Activated CD4-positive, alpha-beta T cell treated with anti-CD3 and anti-CD28 coated beads, Interleukin-2, amount 10 ng/mL, durations not matched to agents 24 days and 14 days (primary cell): ENCODE measurements at regions of chr17 and their contacts with region 1.

Region 1: DNA sequence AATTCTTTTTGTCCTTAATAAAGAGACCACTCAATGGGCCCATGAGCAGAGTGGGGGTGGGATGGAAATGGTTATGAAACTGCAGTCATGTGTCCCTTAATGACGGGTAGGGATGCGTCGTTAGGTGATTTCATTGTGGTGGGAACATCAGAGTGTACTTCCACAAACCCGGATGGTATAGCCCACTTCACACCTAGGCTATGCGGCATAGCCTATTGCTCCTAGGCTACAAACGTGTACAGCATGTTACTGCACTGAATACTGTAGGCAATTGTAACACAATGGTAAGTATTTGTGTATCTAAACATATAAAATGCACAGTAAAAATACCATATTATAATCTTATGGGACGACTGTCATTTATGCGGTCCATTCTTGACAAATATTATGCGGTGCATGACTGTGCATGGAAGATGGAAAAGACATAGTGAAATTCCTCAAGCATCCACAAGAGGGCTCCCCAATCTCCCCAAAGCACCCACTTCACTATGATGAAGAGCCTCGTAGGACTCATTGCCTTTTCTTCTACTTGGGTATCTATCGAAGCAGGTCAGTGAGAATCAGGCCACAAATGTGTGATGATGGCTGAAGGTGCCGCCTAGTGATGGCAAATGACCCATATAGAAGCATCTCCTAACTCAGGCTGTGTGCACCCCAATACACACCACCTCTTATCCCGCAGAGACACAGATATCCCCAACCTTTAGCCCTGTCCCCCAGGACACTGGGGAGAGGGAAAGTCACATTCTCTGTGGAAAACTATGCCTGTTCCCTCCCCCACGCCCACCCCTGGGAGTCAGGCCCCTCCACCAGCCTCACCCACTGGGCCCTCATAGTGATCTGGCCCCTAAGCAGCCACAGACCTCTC is 43.5 kb downstream of the TBX21 start:
- DNase-seq: peak; percentile 81
- H3K4me3 Mint-ChIP-seq: no peak overlapping the region
- H3K27ac Mint-ChIP-seq: no peak overlapping the region
- H3K4me1 Mint-ChIP-seq: peaks cover 2% of the 10 kb centered on the region
- H3K27me3 Mint-ChIP-seq: peaks cover 52% of the 10 kb centered on the region

Region 2: DNA sequence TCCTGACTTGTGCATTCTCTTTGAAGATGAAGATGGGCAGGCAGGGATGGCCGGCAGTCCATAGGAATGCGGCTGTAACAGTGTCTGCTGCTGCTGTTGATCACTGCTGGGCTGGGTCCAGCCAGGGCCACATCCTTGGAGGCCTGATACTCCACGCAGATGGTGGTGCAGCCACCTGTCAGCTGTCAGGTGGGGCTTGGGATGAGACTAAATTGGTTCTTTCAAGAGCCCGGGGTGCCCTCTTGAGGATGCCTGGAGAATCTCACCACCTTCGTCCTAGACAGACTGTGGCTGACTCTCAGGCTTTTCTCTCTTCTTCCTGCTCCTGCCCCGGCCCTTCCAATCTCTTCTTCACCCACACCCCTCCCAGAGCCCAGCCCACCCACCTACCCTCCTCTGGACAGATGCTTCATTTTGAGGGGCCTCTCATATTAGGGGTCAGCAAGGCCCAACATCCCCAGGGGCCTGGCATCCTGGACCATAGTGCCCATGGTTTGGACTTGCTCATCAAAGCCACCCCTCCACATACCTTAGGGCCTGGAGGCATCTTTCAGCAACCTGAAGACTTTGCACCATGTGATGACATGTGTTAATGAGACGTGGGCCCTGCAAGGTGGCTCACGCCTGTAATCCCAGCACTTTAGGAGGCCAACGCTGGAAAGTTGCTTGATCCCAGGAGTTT is 25.9 kb after region 1 on chr17:
- intact Hi-C with region 1: loop called (anchors 2 kb)
- DNase-seq: peak; percentile 87
- H3K4me3 Mint-ChIP-seq: no peak overlapping the region
- H3K27ac Mint-ChIP-seq: no peak overlapping the region
- H3K4me1 Mint-ChIP-seq: peaks cover 3% of the 10 kb centered on the region
- H3K27me3 Mint-ChIP-seq: peaks cover 5% of the 10 kb centered on the region

Region 3: GRCh38 chr17:47889734-47890529 is 113.4 kb after region 1 on chr17:
- intact Hi-C with region 1: loop called (anchors 1 kb)
- DNase-seq: peak; percentile 96
- H3K4me3 Mint-ChIP-seq: no peak overlapping the region
- H3K27ac Mint-ChIP-seq: no peak overlapping the region
- H3K4me1 Mint-ChIP-seq: peaks cover 18% of the 10 kb centered on the region
- H3K27me3 Mint-ChIP-seq: no peaks in the 10 kb centered on the region

Region 4: DNA sequence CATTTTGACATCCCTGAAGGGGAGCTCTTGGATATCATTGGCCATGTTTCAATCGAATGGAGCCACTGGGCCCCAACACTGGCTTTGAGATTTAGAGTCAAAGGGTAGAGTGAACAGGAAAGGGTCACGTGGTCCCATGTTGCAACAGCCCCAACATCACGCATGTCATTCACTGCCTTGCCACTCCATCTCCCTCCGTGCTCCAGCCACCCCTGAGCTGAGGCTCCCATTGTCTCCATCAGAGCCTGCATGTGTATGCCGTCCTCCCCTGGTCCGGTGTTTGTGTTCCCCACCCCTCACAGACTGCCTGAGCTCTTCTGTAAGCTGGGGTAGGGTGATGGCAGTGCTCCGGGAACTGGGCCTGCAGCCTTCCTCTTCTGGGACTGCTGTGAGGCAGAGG is 283.7 kb after region 1 on chr17:
- intact Hi-C with region 1: no loop called
- DNase-seq: no peak
- H3K4me3 Mint-ChIP-seq: no peak overlapping the region
- H3K27ac Mint-ChIP-seq: no peak overlapping the region
- H3K4me1 Mint-ChIP-seq: peaks cover 24% of the 10 kb centered on the region
- H3K27me3 Mint-ChIP-seq: no peaks in the 10 kb centered on the region